AG04449 (cell line): ENCODE measurements at regions of chr1 and their contacts with region 1.

Region 1: DNA sequence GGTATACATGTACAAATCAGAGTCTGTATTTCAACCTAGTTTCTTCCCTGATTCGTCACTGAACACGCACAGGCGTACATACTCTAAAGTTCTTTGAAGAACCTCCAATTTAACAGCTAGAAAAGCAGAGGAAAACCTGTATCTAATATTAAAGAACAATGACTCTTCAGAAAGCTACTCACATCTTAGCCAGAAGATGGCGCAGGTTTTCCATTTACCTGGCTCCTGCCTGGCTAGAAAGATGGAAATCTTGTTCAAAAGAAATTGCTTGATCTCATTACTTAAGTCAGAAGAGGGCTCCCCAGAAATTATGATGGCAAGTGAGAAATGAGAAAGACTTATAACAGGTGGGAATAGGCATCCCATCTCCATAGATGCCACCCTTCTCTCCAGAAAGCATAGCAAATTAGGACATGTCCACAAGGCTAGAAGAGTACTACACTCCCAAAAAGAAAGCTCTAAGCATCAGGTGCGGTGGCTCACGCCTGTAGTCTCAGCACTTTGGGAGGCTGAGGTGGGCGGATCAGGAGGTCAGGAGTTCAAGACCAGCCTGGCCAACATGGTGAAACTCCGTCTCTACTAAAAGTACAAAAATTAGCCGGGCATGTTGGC is 19.0 kb upstream of the L1TD1 start:
- DNase-seq: no peak
- H3K4me3 ChIP-seq: no peak overlapping the region
- CTCF ChIP-seq: peak; percentile 67

Region 2: DNA sequence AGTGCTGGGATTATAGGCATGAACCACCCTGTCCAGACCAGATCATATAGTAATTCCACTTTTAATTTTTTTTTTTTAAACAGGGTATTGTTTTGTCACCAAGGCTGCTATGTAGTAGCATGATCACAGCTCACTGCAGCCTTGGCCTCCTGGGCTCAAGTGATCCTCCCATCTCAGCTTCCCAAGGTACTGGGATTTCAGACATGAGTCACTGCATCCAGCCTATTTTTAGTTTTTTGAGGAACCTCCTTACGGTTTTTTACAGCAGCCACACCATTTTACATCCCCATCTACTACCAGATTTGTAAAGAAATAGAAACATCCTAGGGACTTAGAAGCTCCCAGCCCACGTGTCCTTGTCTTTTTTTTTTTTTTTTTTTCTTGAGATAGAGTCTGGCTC is 42.9 kb after region 1 on chr1:
- CTCF ChIA-PET with region 1: no interaction called
- POLR2A ChIA-PET with region 1: no interaction called
- DNase-seq: no peak
- H3K4me3 ChIP-seq: no peak overlapping the region
- CTCF ChIP-seq: no peak

Region 3: GRCh38 chr1:62401034-62401760 is 225.5 kb after region 1 on chr1:
- CTCF ChIA-PET with region 1: interaction called, 120 read pairs
- POLR2A ChIA-PET with region 1: no interaction called
- DNase-seq: no peak
- H3K4me3 ChIP-seq: no peak overlapping the region
- CTCF ChIP-seq: no peak

Region 4: GRCh38 chr1:62407405-62408009 is 231.8 kb after region 1 on chr1:
- CTCF ChIA-PET with region 1: interaction called, 120 read pairs
- POLR2A ChIA-PET with region 1: no interaction called
- DNase-seq: peak; percentile 12
- H3K4me3 ChIP-seq: no peak overlapping the region
- CTCF ChIP-seq: peak; percentile 58

Region 5: GRCh38 chr1:62436039-62436465 is 260.4 kb after region 1 on chr1:
- CTCF ChIA-PET with region 1: interaction called, 13 read pairs
- POLR2A ChIA-PET with region 1: no interaction called
- DNase-seq: no peak
- H3K4me3 ChIP-seq: peak overlapping the region; percentile 89
- CTCF ChIP-seq: no peak